Dendritic cell treated with granulocyte-macrophage colony-stimulating factor and Interleukin-4, amounts not matched to agents 40 ng/mL and 50 ng/mL, for 4 days (primary cell): ENCODE measurements at regions of chr6 and their contacts with region 1.

Region 1: DNA sequence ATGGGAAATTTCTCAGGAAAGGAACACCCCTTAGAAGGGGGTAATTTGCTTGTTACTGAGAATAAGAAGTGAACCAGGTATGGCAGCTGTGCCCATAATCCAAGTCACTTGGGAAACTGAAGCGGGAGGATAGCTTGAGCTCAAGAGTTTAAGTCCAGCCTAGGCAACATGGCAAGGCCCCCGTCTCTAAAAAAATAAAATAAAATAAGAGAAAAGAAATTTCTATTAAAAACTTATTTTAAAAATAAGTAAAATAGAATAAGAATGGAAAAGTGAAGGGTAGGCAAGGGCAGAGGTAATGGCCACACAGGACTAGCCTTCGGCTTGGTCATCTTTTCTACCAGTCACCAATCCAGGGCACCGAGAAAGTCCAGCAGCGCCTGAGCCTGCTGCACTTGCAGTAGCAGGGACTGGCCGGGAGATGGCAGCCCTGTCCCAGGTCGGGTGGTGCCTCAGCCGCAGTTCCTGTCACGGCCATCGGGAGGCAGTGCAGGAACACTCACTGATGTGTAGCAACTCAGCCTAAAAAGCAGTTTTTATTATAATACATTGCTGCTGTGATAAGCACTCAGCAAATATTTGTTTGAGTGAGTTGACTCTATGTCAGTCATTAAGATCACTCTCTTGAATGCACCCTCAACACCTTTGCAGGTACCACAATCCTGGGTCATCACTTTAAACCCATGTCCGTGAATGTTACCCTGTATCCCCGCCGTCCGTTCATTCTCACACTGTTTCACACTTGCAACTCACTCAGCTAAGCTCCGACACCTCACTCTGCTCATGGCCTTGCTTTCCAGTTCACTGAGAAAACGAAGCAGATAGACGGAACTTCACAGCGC is 23.2 kb upstream of the GCM1 start:
- H3K4me3 Mint-ChIP-seq: no peak overlapping the region
- H3K27ac Mint-ChIP-seq: no peak overlapping the region
- H3K4me1 Mint-ChIP-seq: peaks cover 15% of the 10 kb centered on the region
- H3K27me3 Mint-ChIP-seq: peaks cover 2% of the 10 kb centered on the region

Region 2: DNA sequence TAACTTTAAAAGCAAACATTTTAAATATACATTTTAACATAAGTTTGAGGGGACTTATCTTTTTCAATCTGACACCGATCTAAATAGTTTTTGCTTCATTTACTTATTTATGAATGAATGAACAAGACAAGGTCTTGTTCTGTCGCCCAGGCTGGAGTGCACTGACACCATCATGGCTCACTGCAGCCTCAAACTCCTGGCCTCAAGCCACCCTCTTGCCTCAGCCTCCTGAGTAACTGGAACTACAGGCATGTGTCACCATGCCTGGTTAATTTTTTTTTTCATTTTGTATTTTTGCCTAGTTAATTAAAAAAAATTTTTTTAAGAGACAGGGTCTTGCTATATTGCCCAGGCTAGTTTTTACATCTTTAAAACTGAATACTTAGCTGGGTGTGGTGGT is 81.2 kb before region 1 on chr6:
- intact Hi-C with region 1: no loop called
- H3K4me3 Mint-ChIP-seq: no peak overlapping the region
- H3K27ac Mint-ChIP-seq: no peak overlapping the region
- H3K4me1 Mint-ChIP-seq: no peaks in the 10 kb centered on the region
- H3K27me3 Mint-ChIP-seq: no peaks in the 10 kb centered on the region

Region 3: GRCh38 chr6:53410508-53411258 is 238.9 kb after region 1 on chr6:
- intact Hi-C with region 1: loop called (anchors 1 kb)
- H3K4me3 Mint-ChIP-seq: no peak overlapping the region
- H3K27ac Mint-ChIP-seq: no peak overlapping the region
- H3K4me1 Mint-ChIP-seq: peaks cover 11% of the 10 kb centered on the region
- H3K27me3 Mint-ChIP-seq: no peaks in the 10 kb centered on the region

Region 4: GRCh38 chr6:53437557-53438202 is 265.9 kb after region 1 on chr6:
- intact Hi-C with region 1: loop called (anchors 1 kb)
- H3K4me3 Mint-ChIP-seq: no peak overlapping the region
- H3K27ac Mint-ChIP-seq: no peak overlapping the region
- H3K4me1 Mint-ChIP-seq: peaks cover 30% of the 10 kb centered on the region
- H3K27me3 Mint-ChIP-seq: no peaks in the 10 kb centered on the region